Right ventricle myocardium inferior (tissue), 1 donor: ENCODE measurements at regions of chr4 and their contacts with region 1.

Region 1: GRCh38 chr4:2494992-2495391 is 26.1 kb downstream of the RNF4 start:
- DNase-seq: no peak
- ATAC-seq: peak; percentile 54

Region 2: GRCh38 chr4:2482693-2483092 is 12.3 kb before region 1 on chr4:
- intact Hi-C with region 1: loop called (anchors 1 kb)
- DNase-seq: no peak
- ATAC-seq: peak; percentile 76